A673 (cell line): ENCODE measurements at regions of chr7 and their contacts with region 1.

Region 1: GRCh38 chr7:128841921-128842651 is 11.9 kb downstream of the FLNC start:
- DNase-seq: peak; percentile 63
- H3K4me3 ChIP-seq: no peak overlapping the region
- H3K27ac ChIP-seq: no peak overlapping the region
- H3K4me1 ChIP-seq: no peaks in the 10 kb centered on the region
- H3K27me3 ChIP-seq: no peaks in the 10 kb centered on the region
- CTCF ChIP-seq: peak; percentile 92

Region 2: GRCh38 chr7:128728598-128728997 is 113.5 kb before region 1 on chr7:
- CTCF ChIA-PET with region 1: no interaction called
- POLR2A ChIA-PET with region 1: no interaction called
- intact Hi-C with region 1: no loop called
- DNase-seq: no peak
- H3K4me3 ChIP-seq: no peak overlapping the region
- H3K27ac ChIP-seq: no peak overlapping the region
- H3K4me1 ChIP-seq: peaks cover 14% of the 10 kb centered on the region
- H3K27me3 ChIP-seq: no peaks in the 10 kb centered on the region
- CTCF ChIP-seq: no peak

Region 3: GRCh38 chr7:129433847-129434674 is 592.0 kb after region 1 on chr7 and contains the start of gene STRIP2:
- CTCF ChIA-PET with region 1: interaction called, 10 read pairs
- POLR2A ChIA-PET with region 1: no interaction called
- intact Hi-C with region 1: no loop called
- DNase-seq: peak; percentile 91
- H3K4me3 ChIP-seq: peak within 1 kb of the TSS; percentile 80
- H3K27ac ChIP-seq: peak within 1 kb of the TSS; percentile 77
- H3K4me1 ChIP-seq: peaks cover 9% of the 10 kb centered on the region
- H3K27me3 ChIP-seq: no peaks in the 10 kb centered on the region
- CTCF ChIP-seq: no peak
- total RNA-seq, gene STRIP2: 9.1 and 10.7 TPM in 2 replicates